ENCODE measurements at regions of chr21 and their contacts with region 1.

Region 1: GRCh38 chr21:35051287-35051818 is 2.3 kb upstream of the RUNX1 start:
- DNase-seq: peak; percentile 80
- ATAC-seq: peak; percentile 91
- H3K4me3 ChIP-seq: peak overlapping the region in 1 of 2 experiments; percentile 31; a peak in 2 of 4 replicates
- H3K27ac ChIP-seq: peak overlapping the region; percentile 43; the same call in 1 of the 2 replicates
- H3K4me1 ChIP-seq: peaks cover 27 to 50% of the 10 kb centered on the region in 2 experiments
- H3K27me3 ChIP-seq: no peaks in the 10 kb centered on the region
- CTCF ChIP-seq: peak; percentile 42 to 78 (median 75); a peak in 5 of 6 replicates
- POLR2A ChIP-seq: no peak
- RAD21 ChIP-seq: peak; percentile 76

Region 2: DNA sequence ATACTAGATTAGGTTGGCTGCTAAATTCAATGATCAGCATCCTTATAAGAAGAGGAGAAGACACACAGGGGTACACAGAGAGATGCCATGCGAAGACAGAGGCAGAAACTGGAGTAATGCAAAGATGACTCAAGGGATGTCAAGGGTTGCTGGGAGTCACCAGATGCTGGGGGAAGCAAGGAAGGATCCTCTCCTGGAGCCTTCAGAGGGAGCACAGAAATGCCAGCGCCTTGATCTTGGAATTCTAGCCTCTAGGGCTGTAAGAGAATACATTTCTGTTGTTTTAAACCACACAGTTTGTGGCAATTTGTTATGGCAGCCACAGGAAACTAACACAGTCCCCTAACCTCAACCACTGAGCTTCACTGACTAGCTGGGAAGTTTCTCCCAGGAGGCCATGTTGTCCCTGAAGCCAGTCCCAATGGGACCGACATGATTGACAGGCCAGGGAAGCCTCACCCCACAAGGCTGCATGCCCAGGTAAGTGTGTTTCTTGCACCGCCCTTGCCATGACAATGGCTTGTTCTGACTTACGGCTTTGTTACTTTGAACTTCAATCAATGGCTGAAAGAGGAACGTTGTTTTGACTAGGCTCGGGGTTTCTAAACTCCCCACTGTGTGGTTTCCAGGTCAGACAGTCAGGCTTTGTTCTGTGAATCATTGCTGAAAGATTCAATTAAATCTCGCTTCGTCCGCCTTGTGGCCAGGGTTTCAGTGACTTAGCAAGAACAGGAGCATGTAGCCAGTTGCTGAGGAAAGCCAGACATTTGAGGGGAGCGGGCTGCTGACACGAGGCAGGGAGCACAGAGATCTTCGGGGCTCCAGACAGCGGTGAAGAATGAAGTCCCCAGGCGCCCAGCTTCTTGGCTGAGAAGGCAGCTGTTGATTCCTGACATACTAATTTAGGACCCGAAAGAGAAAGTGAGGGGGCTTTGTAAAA is 64.5 kb before region 1 on chr21:
- CTCF ChIA-PET with region 1: no interaction called
- POLR2A ChIA-PET with region 1: no interaction called
- RAD21 ChIA-PET with region 1: no interaction called
- intact Hi-C with region 1: loop called (anchors 1 kb)
- DNase-seq: peak; percentile 93
- ATAC-seq: peak; percentile 93
- H3K4me3 ChIP-seq: no peak overlapping the region; a peak in 1 of 4 replicates
- H3K27ac ChIP-seq: no peak overlapping the region
- H3K4me1 ChIP-seq: peaks cover 27 to 40% of the 10 kb centered on the region in 2 experiments
- H3K27me3 ChIP-seq: peaks cover 30% of the 10 kb centered on the region
- CTCF ChIP-seq: 0 out of 6 replicates have a peak, but pooled peaks of 1 of the 3 experiments have one; percentile 10
- POLR2A ChIP-seq: no peak
- RAD21 ChIP-seq: peak; percentile 22; the same call in 1 of the 2 replicates

Region 3: GRCh38 chr21:35400233-35400957 is 349.0 kb after region 1 on chr21:
- CTCF ChIA-PET with region 1: interaction called, 14 read pairs
- POLR2A ChIA-PET with region 1: no interaction called
- RAD21 ChIA-PET with region 1: interaction called in 1 of 2 experiments, 11 read pairs
- intact Hi-C with region 1: loop called (anchors 1 kb)
- DNase-seq: peak; percentile 81
- ATAC-seq: peak; percentile 96
- H3K4me3 ChIP-seq: no peak overlapping the region
- H3K27ac ChIP-seq: no peak overlapping the region
- H3K4me1 ChIP-seq: peaks cover 6 to 29% of the 10 kb centered on the region in 2 experiments; a peak in 3 of 4 replicates
- H3K27me3 ChIP-seq: no peaks in the 10 kb centered on the region
- CTCF ChIP-seq: peak; percentile 52 to 71 (median 65); a peak in 5 of 6 replicates
- POLR2A ChIP-seq: no peak
- RAD21 ChIP-seq: peak; percentile 89

Region 4: GRCh38 chr21:35932232-35932911 is 881.0 kb after region 1 on chr21:
- CTCF ChIA-PET with region 1: no interaction called
- POLR2A ChIA-PET with region 1: no interaction called
- RAD21 ChIA-PET with region 1: no interaction called
- intact Hi-C with region 1: loop called (anchors 5 kb)
- DNase-seq: peak; percentile 91
- ATAC-seq: peak; percentile 89
- H3K4me3 ChIP-seq: 0 out of 4 replicates have a peak overlapping the region, but pooled peaks of 1 of the 2 experiments have one; percentile 4
- H3K27ac ChIP-seq: peak overlapping the region; percentile 42
- H3K4me1 ChIP-seq: peaks cover 23 to 31% of the 10 kb centered on the region in 2 experiments
- H3K27me3 ChIP-seq: no peaks in the 10 kb centered on the region
- CTCF ChIP-seq: no peak
- POLR2A ChIP-seq: no peak
- RAD21 ChIP-seq: 0 out of 2 replicates have a peak, but pooled peaks have one; percentile 4

Region 5: DNA sequence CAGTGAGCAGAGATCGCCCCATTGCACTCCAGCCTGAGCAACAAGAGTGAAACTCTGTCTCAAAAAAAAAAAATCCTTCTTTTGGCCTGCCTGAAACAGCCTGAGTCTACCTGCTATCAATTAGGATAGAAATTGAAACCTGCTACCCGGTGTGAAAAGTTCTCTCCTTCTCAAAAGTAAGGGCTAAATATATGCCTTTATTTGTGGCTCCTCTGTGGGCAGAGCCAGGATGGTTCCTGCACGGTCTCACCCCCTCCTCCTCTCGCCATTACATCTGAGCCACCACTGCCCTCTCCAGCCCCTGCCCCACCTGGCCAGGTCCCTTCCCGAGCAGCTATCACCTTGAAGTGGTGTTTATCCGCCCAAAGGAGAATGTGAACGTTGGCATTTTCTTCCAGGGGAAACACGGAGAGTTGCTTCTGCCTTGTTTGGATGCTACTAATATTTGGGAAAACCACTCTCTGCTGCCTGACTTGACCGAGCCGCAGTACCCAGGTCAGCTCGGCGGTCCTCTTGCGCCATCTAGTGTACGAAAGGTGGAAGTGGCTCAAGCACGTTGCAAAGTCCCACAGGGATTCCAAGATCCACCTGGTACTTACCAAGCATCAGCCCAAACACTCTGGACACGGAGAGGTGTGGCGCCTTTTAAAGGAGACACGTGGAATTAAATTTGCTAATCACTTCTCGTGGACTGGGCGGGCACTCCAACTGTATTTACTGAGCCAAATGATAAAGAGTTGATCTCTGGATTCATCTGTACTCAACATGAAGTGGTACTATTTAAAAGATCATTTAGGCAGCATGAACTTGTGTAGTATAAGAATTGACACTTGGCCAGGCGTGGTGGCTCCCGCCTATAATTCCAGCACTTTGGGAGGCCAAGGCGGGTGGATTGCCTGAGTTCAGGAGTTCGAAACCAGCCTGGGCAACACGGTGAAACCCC is 977.0 kb after region 1 on chr21:
- CTCF ChIA-PET with region 1: no interaction called
- POLR2A ChIA-PET with region 1: no interaction called
- RAD21 ChIA-PET with region 1: no interaction called
- intact Hi-C with region 1: loop called (anchors 2 kb)
- DNase-seq: peak; percentile 64
- ATAC-seq: peak; percentile 98
- H3K4me3 ChIP-seq: no peak overlapping the region
- H3K27ac ChIP-seq: no peak overlapping the region
- H3K4me1 ChIP-seq: peaks cover 0 to 2% of the 10 kb centered on the region in 2 experiments; a peak in 1 of 4 replicates
- H3K27me3 ChIP-seq: no peaks in the 10 kb centered on the region
- CTCF ChIP-seq: peak; percentile 52 to 98 (median 94); a peak in 5 of 6 replicates
- POLR2A ChIP-seq: no peak
- RAD21 ChIP-seq: peak; percentile 89

Measured in HCT116 (cell line).